WTC11 (cell line): ENCODE measurements at regions of chr2 and their contacts with region 1.

Region 1: DNA sequence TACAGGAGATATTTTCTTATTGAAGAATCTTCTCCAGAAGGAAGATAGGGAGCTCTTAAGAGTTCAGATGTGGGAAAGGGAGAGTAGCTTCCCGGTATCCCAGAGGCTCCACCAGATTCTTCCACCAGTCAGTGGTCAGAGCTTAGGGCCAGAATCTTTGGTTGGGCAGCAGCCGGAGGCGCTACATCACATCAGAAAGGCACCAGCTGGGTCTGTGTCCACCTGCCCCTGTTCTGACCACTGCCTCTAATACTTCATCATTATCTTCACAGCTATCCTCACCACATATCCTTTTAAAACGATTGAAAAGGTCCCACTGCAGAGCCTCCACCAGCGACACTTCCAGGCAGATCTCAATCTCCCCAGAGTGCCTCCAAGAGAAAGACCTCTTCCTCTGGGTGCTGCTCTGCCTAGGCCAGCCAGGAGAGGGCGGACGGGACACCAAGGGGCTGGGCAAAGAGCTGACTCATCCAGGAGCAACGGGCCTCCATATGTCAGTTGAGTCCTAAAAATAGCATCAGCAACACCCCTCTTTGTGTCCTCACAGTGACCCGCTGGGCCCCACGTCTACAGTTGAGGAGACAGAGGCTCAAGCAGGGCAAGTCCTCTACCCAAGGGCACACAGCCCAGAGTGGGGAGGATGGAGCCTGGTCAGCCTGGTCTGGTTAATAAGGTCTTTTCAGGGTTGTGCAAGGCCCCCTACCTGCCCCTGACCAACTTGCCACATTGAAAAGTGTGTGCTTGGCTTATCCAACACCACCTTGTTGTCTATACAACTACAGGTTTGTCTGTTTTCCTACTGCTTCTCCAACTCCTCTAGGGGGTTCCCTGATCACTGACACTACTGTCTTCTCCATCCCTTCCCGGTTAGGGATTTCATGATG is 81.2 kb downstream of the ADD2 start:
- DNase-seq: peak; percentile 84
- ATAC-seq: peak; percentile 96
- H3K4me3 Mint-ChIP-seq: no peak overlapping the region
- H3K27ac Mint-ChIP-seq: peak overlapping the region; percentile 13; the same call in 1 of the 2 replicates
- H3K4me1 Mint-ChIP-seq: peaks cover 13% of the 10 kb centered on the region
- H3K27me3 Mint-ChIP-seq: no peaks in the 10 kb centered on the region
- CTCF ChIP-seq: peak; percentile 44

Region 2: GRCh38 chr2:70632389-70632788 is 54.4 kb before region 1 on chr2:
- CTCF ChIA-PET with region 1: no interaction called
- POLR2A ChIA-PET with region 1: no interaction called
- DNase-seq: no peak
- ATAC-seq: no peak
- H3K4me3 Mint-ChIP-seq: no peak overlapping the region
- H3K27ac Mint-ChIP-seq: no peak overlapping the region
- H3K4me1 Mint-ChIP-seq: peaks cover 26% of the 10 kb centered on the region
- H3K27me3 Mint-ChIP-seq: peaks cover 14% of the 10 kb centered on the region
- CTCF ChIP-seq: no peak

Region 3: DNA sequence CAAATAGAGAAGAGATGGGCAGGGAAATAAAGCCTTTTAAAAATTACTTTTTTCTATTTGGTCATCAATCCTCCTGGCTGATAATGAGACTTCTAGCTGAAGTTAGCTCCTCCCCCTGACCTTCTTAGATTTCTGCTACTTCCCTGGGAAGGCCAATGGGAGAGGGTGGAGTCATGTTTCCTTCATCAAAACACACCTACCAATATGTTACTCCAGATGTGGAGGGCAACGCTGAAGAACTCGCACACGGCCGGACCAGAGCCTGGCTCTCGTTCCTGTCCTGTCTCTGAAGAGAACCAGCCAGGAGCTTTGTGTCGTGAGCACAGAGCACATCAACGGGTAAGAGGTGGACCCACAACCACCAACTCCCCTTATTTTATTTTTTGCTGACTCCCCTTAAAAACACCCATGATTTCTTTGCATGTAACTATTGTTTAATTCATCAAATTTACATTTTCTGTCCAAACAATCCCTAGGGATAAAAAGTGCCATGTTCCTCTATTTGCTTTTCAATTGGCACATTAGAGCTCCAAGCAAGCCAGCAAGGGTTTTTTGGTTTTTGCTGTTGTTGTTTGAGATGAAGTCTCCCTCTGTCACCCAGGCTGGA is 13.7 kb before region 1 on chr2:
- CTCF ChIA-PET with region 1: interaction called, 10 read pairs
- POLR2A ChIA-PET with region 1: no interaction called
- DNase-seq: no peak
- ATAC-seq: peak; percentile 61
- H3K4me3 Mint-ChIP-seq: no peak overlapping the region
- H3K27ac Mint-ChIP-seq: no peak overlapping the region
- H3K4me1 Mint-ChIP-seq: 0 out of 2 replicates have a peak, but pooled peaks cover 5% of the 10 kb centered on the region
- H3K27me3 Mint-ChIP-seq: no peaks in the 10 kb centered on the region
- CTCF ChIP-seq: no peak

Region 4: GRCh38 chr2:70748002-70748784 is 61.4 kb after region 1 on chr2:
- CTCF ChIA-PET with region 1: interaction called, 15 read pairs
- POLR2A ChIA-PET with region 1: no interaction called
- DNase-seq: no peak
- ATAC-seq: peak; percentile 68
- H3K4me3 Mint-ChIP-seq: no peak overlapping the region
- H3K27ac Mint-ChIP-seq: no peak overlapping the region
- H3K4me1 Mint-ChIP-seq: peaks cover 76% of the 10 kb centered on the region
- H3K27me3 Mint-ChIP-seq: no peaks in the 10 kb centered on the region
- CTCF ChIP-seq: no peak